ENCODE measurements at regions of chr1 and their contacts with region 1.

Region 1: GRCh38 chr1:43529206-43529731 is 1.4 kb upstream of the PTPRF start:
- DNase-seq: peak; percentile 84 to 88
- ATAC-seq: peak; percentile 78 to 93 (median 89)
- H3K4me3 ChIP-seq: no peak overlapping the region
- H3K27ac ChIP-seq: no peak overlapping the region
- H3K4me1 ChIP-seq: peaks cover 8% of the 10 kb centered on the region
- H3K27me3 ChIP-seq: peaks cover 0 to 23% (median 3%) of the 10 kb centered on the region in 3 donors
- CTCF ChIP-seq: peak; percentile 95

Region 2: DNA sequence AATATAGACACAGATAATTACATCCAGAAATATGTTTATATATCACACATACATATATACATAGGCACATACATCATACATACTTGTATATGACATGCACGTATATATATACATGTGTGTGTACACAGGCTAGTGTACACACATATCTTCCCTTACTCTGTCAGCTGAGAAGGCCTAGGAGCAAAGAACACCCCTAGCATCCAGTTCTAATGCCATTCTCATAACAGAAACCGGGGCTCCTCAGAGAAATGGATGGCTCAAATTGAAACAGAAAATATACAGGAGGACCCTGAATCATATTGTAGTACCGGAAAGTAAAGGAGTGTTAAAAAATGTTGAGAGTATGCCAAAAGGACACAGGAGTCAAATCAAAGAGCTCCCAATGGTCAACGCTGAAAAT is 55.8 kb before region 1 on chr1:
- intact Hi-C with region 1: no loop called
- DNase-seq: no peak
- ATAC-seq: no peak
- H3K4me3 ChIP-seq: no peak overlapping the region
- H3K27ac ChIP-seq: no peak overlapping the region
- H3K4me1 ChIP-seq: no peaks in the 10 kb centered on the region
- H3K27me3 ChIP-seq: no peaks in the 10 kb centered on the region
- CTCF ChIP-seq: no peak

Region 3: DNA sequence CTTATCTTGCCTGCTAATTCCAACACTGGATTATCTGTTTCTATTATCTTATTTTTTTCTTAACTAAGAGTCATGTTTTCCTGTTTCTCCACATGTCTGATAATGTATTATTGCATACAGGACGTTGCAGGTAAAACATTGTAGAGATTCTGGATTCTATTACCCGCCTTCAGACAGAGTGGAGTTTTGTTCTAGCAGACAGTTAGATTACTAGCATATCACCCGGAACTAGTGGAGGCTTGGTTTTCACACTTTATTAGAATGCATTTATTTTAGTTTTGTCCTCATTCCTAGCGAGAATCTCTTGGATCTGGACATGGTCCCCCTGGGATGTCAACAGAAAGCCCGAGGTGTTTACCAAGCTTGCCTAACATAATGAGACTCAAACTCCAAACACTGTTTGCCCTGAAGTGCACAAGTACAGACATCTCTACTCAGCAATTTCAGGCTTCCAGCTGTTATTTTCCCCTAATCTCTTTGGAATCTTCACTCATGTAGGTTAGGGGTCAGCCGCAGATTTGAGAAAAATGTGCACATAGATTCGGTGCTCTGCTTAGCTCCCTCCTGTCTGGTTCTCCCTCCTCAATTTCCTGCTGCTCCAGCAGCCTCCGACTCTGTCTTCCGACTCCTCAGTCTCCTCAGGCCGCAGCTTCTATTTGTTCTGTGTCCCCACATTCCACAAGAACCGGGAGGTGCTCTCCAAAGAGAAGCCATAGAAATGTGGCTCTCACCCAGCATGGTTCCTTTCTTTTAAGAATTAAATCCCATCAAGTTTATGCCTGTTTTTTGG is 35.4 kb before region 1 on chr1:
- intact Hi-C with region 1: no loop called
- DNase-seq: no peak
- ATAC-seq: no peak
- H3K4me3 ChIP-seq: no peak overlapping the region
- H3K27ac ChIP-seq: no peak overlapping the region
- H3K4me1 ChIP-seq: no peaks in the 10 kb centered on the region
- H3K27me3 ChIP-seq: no peaks in the 10 kb centered on the region
- CTCF ChIP-seq: no peak

Region 4: DNA sequence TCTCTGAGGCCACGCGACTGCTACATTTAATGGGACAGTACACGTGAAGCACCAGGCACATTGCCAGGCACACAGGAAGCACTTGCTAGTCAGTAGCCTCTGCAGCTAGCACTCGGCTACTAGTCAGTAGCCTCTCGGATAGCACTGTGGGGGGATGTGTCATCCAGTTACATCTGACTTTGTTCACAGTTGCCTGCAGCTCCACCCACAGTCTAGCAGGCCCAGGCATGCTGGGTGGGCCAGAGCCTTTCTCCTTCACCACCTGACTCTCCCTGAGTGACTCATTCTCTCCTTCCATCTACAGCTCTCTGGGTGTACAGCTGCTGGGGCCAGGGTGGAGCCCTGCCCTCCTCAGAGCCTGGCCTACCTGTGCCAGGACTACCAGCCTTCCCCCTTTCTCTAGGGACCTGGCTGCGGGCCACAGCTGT is 52.9 kb after region 1 on chr1:
- intact Hi-C with region 1: no loop called
- DNase-seq: peak in 1 of 2 donors; percentile 41
- ATAC-seq: peak; percentile 73 to 97 (median 90)
- H3K4me3 ChIP-seq: no peak overlapping the region
- H3K27ac ChIP-seq: no peak overlapping the region
- H3K4me1 ChIP-seq: no peaks in the 10 kb centered on the region
- H3K27me3 ChIP-seq: no peaks in the 10 kb centered on the region
- CTCF ChIP-seq: no peak

Region 5: DNA sequence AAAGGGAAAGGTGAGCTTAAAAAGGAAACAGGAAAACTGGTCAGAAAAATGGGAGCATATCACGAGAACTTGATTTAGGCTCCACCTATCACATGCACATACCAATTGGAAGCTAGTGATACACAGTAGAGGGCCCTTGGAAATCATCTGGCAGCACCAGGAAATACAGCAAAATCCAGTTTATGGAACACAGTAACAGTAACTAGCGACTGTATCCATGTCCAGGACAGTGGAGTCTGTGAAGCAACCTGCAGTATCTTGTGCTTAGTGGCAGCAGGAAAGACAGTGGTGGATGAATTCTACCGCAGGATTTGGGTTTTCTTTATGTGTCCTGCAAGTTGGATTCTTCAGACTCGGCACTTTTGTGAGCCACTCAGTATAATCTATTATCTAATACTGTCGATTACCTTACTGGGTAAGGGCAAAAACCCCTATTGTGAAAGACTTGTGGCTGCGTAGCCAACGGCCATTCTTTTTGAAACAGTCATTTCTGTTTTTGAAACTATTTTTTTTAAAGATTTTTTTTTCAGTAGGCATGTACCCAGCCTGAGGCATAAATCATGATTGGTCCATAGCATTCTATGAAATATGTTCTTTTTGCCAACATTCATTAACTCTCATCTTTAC is 119.1 kb after region 1 on chr1:
- intact Hi-C with region 1: loop called (anchors 5 kb)
- DNase-seq: no peak
- ATAC-seq: no peak
- H3K4me3 ChIP-seq: no peak overlapping the region
- H3K27ac ChIP-seq: no peak overlapping the region
- H3K4me1 ChIP-seq: peaks cover 15% of the 10 kb centered on the region
- H3K27me3 ChIP-seq: no peaks in the 10 kb centered on the region
- CTCF ChIP-seq: no peak

Region 6: GRCh38 chr1:43763497-43763973 is 234.3 kb after region 1 on chr1:
- intact Hi-C with region 1: loop called in 1 of 2 experiments (anchors 5 kb)
- DNase-seq: peak; percentile 40 to 56
- ATAC-seq: peak; percentile 88 to 96 (median 92)
- H3K4me3 ChIP-seq: no peak overlapping the region
- H3K27ac ChIP-seq: no peak overlapping the region
- H3K4me1 ChIP-seq: peaks cover 20% of the 10 kb centered on the region
- H3K27me3 ChIP-seq: no peaks in the 10 kb centered on the region
- CTCF ChIP-seq: peak; percentile 86

Region 7: DNA sequence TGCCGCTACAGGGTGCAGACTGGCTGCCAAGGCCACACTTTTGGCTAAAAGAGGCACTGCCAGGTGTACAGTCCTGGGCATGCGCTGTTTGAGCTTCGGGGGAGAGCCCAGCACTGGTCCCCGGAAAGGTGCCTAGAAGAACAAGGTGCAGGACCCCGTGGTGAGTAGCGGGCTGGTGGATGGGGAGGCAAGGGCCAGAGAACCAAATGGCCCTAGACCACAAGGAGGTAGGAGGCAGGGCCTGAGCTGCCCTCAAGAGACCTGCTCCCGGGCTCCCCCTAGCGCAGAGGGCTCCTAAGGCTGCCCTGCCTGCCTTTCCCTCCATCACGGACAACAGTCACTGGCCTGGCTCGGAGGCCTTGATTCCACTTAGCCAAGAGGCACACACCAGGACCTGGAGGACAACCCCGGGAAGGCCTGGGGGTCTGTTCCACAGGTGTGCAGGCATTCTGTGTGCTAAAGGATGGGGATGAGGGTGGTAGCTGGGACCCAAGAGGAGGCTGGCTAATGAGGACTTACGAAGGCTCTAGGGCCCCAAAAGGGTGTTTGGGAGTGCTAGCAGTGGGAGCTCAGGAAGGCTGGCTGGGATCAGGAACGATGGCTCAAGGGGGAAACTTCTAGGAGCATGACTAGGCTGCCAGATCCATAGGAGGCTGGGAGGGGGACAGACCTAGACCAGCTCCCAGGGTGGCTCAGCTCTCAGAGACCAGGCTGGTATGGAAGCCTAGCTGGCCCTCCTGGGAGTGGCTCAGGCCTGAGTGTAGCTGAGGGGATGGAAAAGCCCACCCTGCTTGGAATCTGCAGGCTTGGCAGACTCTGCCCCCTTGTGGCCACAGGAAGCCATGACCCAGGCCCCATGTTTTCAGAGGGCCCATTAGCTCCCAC is 405.1 kb after region 1 on chr1:
- intact Hi-C with region 1: loop called in 1 of 2 experiments (anchors 5 kb)
- DNase-seq: peak; percentile 72 to 87
- ATAC-seq: peak; percentile 79 to 86 (median 79)
- H3K4me3 ChIP-seq: peak overlapping the region; percentile 61
- H3K27ac ChIP-seq: peak overlapping the region; percentile 50
- H3K4me1 ChIP-seq: peaks cover 25% of the 10 kb centered on the region
- H3K27me3 ChIP-seq: peaks cover 0 to 4% (median 0%) of the 10 kb centered on the region in 3 donors
- CTCF ChIP-seq: peak; percentile 79

Region 8: GRCh38 chr1:43946236-43947060 is 417.2 kb after region 1 on chr1 and contains the start of gene IPO13:
- intact Hi-C with region 1: loop called in 1 of 2 experiments (anchors 10 kb)
- DNase-seq: peak; percentile 96 to 99
- ATAC-seq: peak; percentile 89 to 93 (median 90)
- H3K4me3 ChIP-seq: peak within 1 kb of the TSS; percentile 79
- H3K27ac ChIP-seq: peak within 1 kb of the TSS; percentile 99
- H3K4me1 ChIP-seq: peaks cover 47% of the 10 kb centered on the region
- H3K27me3 ChIP-seq: no peaks in the 10 kb centered on the region
- CTCF ChIP-seq: peak; percentile 69
- total RNA-seq, gene IPO13: 92.4 to 140 (median 108) TPM

Region 9: GRCh38 chr1:44049839-44050238 is 520.6 kb after region 1 on chr1:
- intact Hi-C with region 1: loop called (anchors 5 kb)
- DNase-seq: no peak
- ATAC-seq: no peak
- H3K4me3 ChIP-seq: no peak overlapping the region
- H3K27ac ChIP-seq: no peak overlapping the region
- H3K4me1 ChIP-seq: no peaks in the 10 kb centered on the region
- H3K27me3 ChIP-seq: no peaks in the 10 kb centered on the region
- CTCF ChIP-seq: no peak

Measured in psoas muscle (tissue), 8 donors.